ENCODE measurements at regions of chr2 and their contacts with region 1.

Region 1: GRCh38 chr2:83674050-83674449 is 785.0 kb downstream of the SUCLG1 start:
- DNase-seq: no peak
- ATAC-seq: no peak
- H3K4me3 ChIP-seq: no peak overlapping the region
- H3K27ac ChIP-seq: no peak overlapping the region
- H3K4me1 ChIP-seq: no peaks in the 10 kb centered on the region
- H3K27me3 ChIP-seq: no peaks in the 10 kb centered on the region
- CTCF ChIP-seq: no peak
- POLR2A ChIP-seq: no peak
- RAD21 ChIP-seq: no peak

Region 2: GRCh38 chr2:83661711-83662110 is 12.3 kb before region 1 on chr2:
- CTCF ChIA-PET with region 1: no interaction called
- POLR2A ChIA-PET with region 1: no interaction called
- RAD21 ChIA-PET with region 1: no interaction called
- intact Hi-C with region 1: no loop called
- DNase-seq: no peak
- ATAC-seq: no peak
- H3K4me3 ChIP-seq: no peak overlapping the region
- H3K27ac ChIP-seq: no peak overlapping the region
- H3K4me1 ChIP-seq: no peaks in the 10 kb centered on the region
- H3K27me3 ChIP-seq: no peaks in the 10 kb centered on the region
- CTCF ChIP-seq: no peak
- POLR2A ChIP-seq: no peak
- RAD21 ChIP-seq: no peak

Region 3: DNA sequence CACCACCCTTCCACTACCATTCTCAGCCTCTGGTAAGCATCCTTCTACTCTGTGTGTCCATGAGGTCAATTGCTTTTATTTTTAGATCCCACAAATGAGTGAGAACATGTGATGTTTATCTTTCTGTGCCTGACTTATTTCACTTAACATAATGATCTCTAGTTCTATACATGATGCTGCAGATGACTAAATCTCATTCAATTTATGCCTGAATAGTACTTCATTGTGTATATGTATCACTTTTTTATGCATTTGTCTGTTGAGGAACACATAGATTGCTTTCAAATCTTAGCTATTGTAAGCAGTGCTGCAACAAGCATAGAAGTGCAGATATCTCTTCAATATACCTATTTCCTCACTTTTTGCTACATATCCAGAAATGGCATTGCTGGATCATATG is 51.7 kb after region 1 on chr2:
- CTCF ChIA-PET with region 1: no interaction called
- POLR2A ChIA-PET with region 1: no interaction called
- RAD21 ChIA-PET with region 1: no interaction called
- intact Hi-C with region 1: loop called (anchors 5 kb)
- DNase-seq: no peak
- ATAC-seq: no peak
- H3K4me3 ChIP-seq: no peak overlapping the region
- H3K27ac ChIP-seq: no peak overlapping the region
- H3K4me1 ChIP-seq: no peaks in the 10 kb centered on the region
- H3K27me3 ChIP-seq: no peaks in the 10 kb centered on the region
- CTCF ChIP-seq: no peak
- POLR2A ChIP-seq: no peak
- RAD21 ChIP-seq: no peak

Measured in HCT116 (cell line).